ENCODE measurements at regions of chr6 and their contacts with region 1.

Region 1: GRCh38 chr6:157221007-157221816 is 102.1 kb downstream of the TMEM242 start:
- DNase-seq: peak; percentile 83 to 89
- H3K4me3 ChIP-seq: peak overlapping the region; percentile 5 to 49 (median 21)
- H3K27ac ChIP-seq: peak overlapping the region in 1 of 3 donors; percentile 39
- H3K4me1 ChIP-seq: peaks cover 0 to 10% of the 10 kb centered on the region in 2 donors
- H3K27me3 ChIP-seq: no peaks in the 10 kb centered on the region
- CTCF ChIP-seq: peak in 4 of 6 experiments; percentile 8 to 24 (median 16)
- POLR2A ChIP-seq: no peak

Region 2: GRCh38 chr6:156866220-156867015 is 354.8 kb before region 1 on chr6:
- intact Hi-C with region 1: no loop called
- DNase-seq: peak; percentile 49 to 55
- H3K4me3 ChIP-seq: no peak overlapping the region
- H3K27ac ChIP-seq: peak overlapping the region in 1 of 3 donors; percentile 32
- H3K4me1 ChIP-seq: peaks cover 35 to 39% of the 10 kb centered on the region in 2 donors
- H3K27me3 ChIP-seq: no peaks in the 10 kb centered on the region
- CTCF ChIP-seq: peak in 1 of 6 experiments; percentile 8
- POLR2A ChIP-seq: no peak

Region 3: GRCh38 chr6:157274471-157275226 is 53.4 kb after region 1 on chr6:
- intact Hi-C with region 1: loop called (anchors 5 kb)
- DNase-seq: peak; percentile 73 to 77
- H3K4me3 ChIP-seq: peak overlapping the region; percentile 29 to 64 (median 37)
- H3K27ac ChIP-seq: peak overlapping the region; percentile 73 to 77 (median 76)
- H3K4me1 ChIP-seq: peaks cover 0 to 8% of the 10 kb centered on the region in 2 donors
- H3K27me3 ChIP-seq: no peaks in the 10 kb centered on the region
- CTCF ChIP-seq: peak in 5 of 6 experiments; percentile 22 to 98 (median 95)
- POLR2A ChIP-seq: peak in 1 of 2 donors; percentile 51

Region 4: GRCh38 chr6:157314705-157315321 is 93.6 kb after region 1 on chr6:
- intact Hi-C with region 1: no loop called
- DNase-seq: no peak
- H3K4me3 ChIP-seq: no peak overlapping the region
- H3K27ac ChIP-seq: peak overlapping the region in 1 of 3 donors; percentile 24
- H3K4me1 ChIP-seq: peaks cover 8 to 13% of the 10 kb centered on the region in 2 donors
- H3K27me3 ChIP-seq: no peaks in the 10 kb centered on the region
- CTCF ChIP-seq: peak; percentile 65 to 94 (median 77)
- POLR2A ChIP-seq: no peak

Measured in thyroid gland (tissue), 4 donors.